ENCODE measurements at regions of chr15 and their contacts with region 1.

Region 1: DNA sequence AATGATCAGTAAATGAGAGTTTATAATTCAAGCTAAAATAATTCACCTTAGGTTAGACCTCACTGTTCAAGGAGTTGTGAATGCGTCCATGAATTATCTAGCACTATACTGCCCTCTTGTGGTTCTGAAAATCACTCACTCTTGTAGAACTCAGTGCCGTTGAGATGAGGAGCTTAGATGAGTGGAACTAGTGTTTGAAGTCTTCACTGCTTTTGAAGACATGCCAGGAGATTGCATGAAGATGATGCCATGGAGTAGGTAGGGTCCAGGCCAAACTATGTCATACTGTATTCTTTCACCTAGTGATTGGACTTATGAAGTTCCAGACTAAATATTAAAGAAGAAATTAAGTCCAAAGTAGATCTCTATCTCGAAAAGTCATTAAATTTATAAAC is 28.8 kb downstream of the LYSMD4 start:
- DNase-seq: no peak

Region 2: GRCh38 chr15:99273801-99274200 is 430.6 kb before region 1 on chr15:
- intact Hi-C with region 1: loop called (anchors 5 kb)
- DNase-seq: no peak

Region 3: DNA sequence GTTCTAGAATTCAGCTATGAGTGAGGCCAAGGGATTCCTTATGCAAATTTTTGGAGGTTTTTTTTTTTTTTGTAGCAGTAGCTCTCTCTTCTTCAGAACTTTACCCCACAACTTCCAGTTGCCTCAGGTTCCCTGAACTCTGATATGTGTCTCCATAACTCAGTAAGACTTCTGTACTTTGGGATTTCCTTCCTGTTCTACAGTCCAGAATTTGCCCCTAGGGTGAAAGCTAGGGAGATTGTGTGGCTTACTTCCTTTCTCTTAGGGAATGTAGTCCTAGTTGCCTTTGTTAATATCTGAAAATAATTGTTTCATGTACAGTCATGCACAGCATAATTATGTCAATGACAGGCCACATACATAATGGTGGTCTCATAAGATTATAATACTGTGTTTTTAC is 422.3 kb before region 1 on chr15:
- intact Hi-C with region 1: loop called (anchors 2 kb)
- DNase-seq: no peak

Region 4: GRCh38 chr15:99409097-99409473 is 295.4 kb before region 1 on chr15:
- intact Hi-C with region 1: loop called (anchors 5 kb)
- DNase-seq: peak in 6 of 10 donors; percentile 41 to 94 (median 47)

Region 5: GRCh38 chr15:99565299-99566156 is 138.9 kb before region 1 on chr15 and contains the start of gene MEF2A:
- intact Hi-C with region 1: loop called (anchors 5 kb)
- DNase-seq: peak; percentile 87 to 98 (median 92)

Region 6: DNA sequence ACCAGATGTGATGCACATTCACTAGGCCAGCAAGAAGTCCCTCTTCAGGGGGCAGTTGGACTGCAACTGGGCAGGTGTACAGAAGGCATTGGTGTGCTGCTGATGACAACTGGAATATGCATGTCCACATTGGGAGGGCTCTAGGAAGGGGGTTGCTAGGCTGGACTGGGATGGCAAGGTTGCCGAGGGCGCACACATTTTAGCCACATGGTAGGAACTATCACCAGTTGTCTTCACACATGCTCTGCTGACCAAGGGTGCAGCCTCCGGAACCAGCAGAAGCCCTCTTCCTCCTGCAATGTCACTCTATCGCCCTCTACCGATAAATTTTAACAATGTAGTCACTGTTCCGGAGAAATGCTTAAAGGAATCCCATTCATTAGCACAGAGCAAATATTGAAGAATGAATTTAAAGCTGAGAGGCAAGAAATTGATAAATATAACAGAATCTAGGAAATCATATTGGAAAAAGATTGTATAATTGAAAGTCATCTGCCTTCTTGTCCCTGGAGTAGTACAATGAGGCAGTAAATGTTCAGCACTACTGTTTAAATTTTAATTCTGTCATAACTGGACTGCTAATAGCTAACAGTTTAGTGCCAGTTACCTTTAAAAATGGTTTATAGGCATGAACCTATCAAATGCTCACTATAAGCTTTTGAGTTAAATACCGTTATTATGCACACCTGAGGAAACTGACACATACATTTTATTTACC is 51.4 kb after region 1 on chr15:
- intact Hi-C with region 1: loop called (anchors 10 kb)
- DNase-seq: peak in 6 of 10 donors; percentile 23 to 90 (median 50)

Measured in posterior cingulate gyrus (tissue), 11 donors.